GM10248 (cell line): ENCODE measurements at regions of chr11 and their contacts with region 1.

Region 1: DNA sequence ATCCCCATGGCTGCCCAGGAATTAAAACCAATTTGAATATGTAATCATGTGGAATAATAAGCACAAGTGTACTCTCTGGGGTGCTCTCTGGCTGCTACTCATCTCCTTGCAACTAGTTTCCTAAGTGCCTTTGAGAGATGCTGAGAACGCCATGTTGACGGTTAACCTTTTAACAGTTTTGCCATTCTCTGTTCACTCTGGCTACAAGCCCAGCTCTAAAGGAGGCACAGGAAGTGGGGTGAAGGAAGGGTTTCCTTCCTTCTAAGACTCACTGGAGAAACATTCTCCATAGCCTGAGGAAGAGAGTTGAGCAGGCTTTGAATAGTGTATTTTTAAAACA is 122.0 kb upstream of the ZC3H12C start:
- DNase-seq: no peak
- CTCF ChIP-seq: no peak

Region 2: GRCh38 chr11:109960831-109961230 is 10.3 kb before region 1 on chr11:
- CTCF ChIA-PET with region 1: interaction called, 12 read pairs
- POLR2A ChIA-PET with region 1: no interaction called
- DNase-seq: no peak
- CTCF ChIP-seq: no peak

Region 3: GRCh38 chr11:109991835-109992234 is 20.7 kb after region 1 on chr11:
- CTCF ChIA-PET with region 1: interaction called, 16 read pairs
- POLR2A ChIA-PET with region 1: no interaction called
- DNase-seq: no peak
- CTCF ChIP-seq: no peak

Region 4: GRCh38 chr11:110019675-110020074 is 48.5 kb after region 1 on chr11:
- CTCF ChIA-PET with region 1: no interaction called
- POLR2A ChIA-PET with region 1: no interaction called
- DNase-seq: no peak
- CTCF ChIP-seq: no peak